ENCODE measurements at regions of chr2 and their contacts with region 1.

Region 1: GRCh38 chr2:209334198-209335017 is 89.4 kb upstream of the MAP2 start:
- H3K4me3 ChIP-seq: no peak overlapping the region
- H3K27ac ChIP-seq: no peak overlapping the region
- H3K4me1 ChIP-seq: no peaks in the 10 kb centered on the region
- CTCF ChIP-seq: peak; percentile 55

Region 2: GRCh38 chr2:209269024-209269423 is 65.4 kb before region 1 on chr2:
- CTCF ChIA-PET with region 1: no interaction called
- POLR2A ChIA-PET with region 1: no interaction called
- H3K4me3 ChIP-seq: no peak overlapping the region
- H3K27ac ChIP-seq: no peak overlapping the region
- H3K4me1 ChIP-seq: no peaks in the 10 kb centered on the region
- CTCF ChIP-seq: no peak

Region 3: GRCh38 chr2:209322041-209322440 is 12.4 kb before region 1 on chr2:
- CTCF ChIA-PET with region 1: interaction called, 18 read pairs
- POLR2A ChIA-PET with region 1: no interaction called
- H3K4me3 ChIP-seq: no peak overlapping the region
- H3K27ac ChIP-seq: no peak overlapping the region
- H3K4me1 ChIP-seq: no peaks in the 10 kb centered on the region
- CTCF ChIP-seq: no peak

Region 4: GRCh38 chr2:209368900-209369299 is 34.5 kb after region 1 on chr2:
- CTCF ChIA-PET with region 1: interaction called, 25 read pairs
- POLR2A ChIA-PET with region 1: no interaction called
- H3K4me3 ChIP-seq: no peak overlapping the region
- H3K27ac ChIP-seq: no peak overlapping the region
- H3K4me1 ChIP-seq: peaks cover 14% of the 10 kb centered on the region
- CTCF ChIP-seq: no peak

Region 5: DNA sequence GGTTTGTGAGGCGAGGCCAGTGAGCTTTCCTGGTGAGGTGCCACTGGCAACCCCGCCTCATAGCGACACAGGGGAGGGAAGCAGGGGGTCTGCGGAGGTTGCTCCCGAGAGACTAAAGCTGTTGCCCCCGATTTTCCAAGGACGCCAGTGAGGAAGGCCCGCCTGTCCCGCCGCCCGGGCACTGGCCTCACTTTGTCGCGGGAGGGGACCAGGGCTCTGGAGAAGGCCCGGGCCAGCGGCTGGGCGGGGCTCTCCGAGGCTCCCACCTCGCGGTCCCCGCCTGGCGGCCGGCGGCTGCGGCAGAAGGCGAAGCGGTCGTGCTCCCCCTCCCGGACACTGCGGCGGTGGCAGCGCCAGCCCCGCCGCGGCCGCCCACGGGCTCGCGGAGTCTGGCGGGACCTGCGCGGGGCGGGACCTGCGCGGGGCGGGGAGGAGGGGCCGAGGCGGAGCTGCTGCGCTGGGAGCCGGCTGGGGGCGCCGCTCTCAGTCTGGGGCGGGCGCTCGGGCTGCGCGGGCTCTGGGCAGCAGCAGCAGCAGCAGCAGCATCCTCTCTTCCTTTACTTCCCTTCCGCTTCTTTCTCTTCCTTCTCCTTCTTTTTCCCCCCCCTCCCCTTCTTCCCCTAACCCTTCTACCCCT is 89.3 kb after region 1 on chr2 and contains the start of gene MAP2:
- CTCF ChIA-PET with region 1: interaction called, 97 read pairs
- POLR2A ChIA-PET with region 1: interaction called, 6 read pairs
- H3K4me3 ChIP-seq: peak within 1 kb of the TSS; percentile 64
- H3K27ac ChIP-seq: peak within 1 kb of the TSS; percentile 60; the same call in 1 of the 2 replicates
- H3K4me1 ChIP-seq: peaks cover 11% of the 10 kb centered on the region
- CTCF ChIP-seq: peak; percentile 71

Region 6: DNA sequence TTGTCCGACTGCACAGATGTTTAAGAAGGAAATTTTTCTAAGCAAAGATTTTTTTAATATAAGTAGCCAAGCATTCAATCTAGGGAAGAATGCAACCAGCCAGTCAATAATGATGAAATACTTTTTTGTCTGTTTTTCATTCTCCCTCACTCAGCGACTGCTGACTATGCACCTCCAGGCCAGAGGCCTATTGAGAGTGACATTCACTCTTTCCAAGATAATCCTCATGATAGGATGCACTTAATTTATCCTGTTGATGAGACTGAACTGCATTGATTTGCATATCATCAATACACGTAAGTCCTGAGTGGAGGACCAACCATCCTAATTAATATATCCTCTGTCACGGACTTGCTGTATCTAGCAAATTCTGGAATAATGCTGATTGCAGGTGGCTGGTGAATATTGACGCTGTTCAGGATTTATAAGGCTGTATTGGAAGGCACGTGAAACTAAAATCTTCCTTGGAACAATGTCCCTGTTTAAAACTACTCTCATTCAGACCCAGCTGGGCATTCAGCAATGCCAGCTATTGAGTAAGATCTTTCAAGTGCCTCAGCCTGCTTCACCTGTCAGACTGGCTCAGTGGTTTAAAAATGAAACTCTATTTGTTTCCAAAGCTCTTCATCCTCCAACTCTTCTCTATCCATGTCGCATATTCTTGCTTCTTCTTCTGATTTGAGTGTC is 231.6 kb after region 1 on chr2:
- CTCF ChIA-PET with region 1: interaction called, 23 read pairs
- POLR2A ChIA-PET with region 1: no interaction called
- H3K4me3 ChIP-seq: no peak overlapping the region
- H3K27ac ChIP-seq: no peak overlapping the region
- H3K4me1 ChIP-seq: no peaks in the 10 kb centered on the region
- CTCF ChIP-seq: no peak

Region 7: GRCh38 chr2:210203157-210203947 is 868.9 kb after region 1 on chr2:
- CTCF ChIA-PET with region 1: interaction called, 11 read pairs
- POLR2A ChIA-PET with region 1: no interaction called
- H3K4me3 ChIP-seq: no peak overlapping the region
- H3K27ac ChIP-seq: no peak overlapping the region
- H3K4me1 ChIP-seq: no peaks in the 10 kb centered on the region
- CTCF ChIP-seq: no peak